A673 (cell line): ENCODE measurements at regions of chr12 and their contacts with region 1.

Region 1: DNA sequence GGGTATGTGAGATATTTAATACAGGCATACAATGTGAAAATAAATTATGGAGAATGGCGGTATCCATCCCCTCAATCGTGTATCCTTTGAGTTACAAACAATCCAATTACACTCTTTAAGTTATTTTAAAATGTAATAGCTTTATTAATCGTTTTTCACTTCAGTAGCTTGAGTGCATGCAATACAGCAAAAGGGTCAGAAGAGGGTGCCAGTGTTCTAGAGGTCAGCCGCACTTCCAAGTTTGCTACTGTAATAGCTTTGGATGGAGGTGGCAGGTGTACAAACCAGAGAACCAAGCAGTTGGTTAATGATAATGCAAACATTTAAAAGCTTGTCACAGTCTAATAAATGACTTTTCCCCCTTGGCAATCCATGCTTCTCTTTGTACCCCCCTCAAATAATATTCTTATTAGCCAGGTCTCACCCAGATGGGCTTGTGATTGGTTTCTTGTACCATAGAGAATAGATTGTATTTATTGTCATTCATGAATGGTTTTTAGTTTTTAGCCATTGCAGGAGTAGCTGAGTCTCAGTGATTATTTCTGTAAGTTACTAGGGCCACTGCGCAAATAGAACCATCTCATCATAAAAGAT is 127.0 kb downstream of the ERC1 start:
- DNase-seq: peak; percentile 74
- H3K4me3 ChIP-seq: no peak overlapping the region
- H3K27ac ChIP-seq: no peak overlapping the region
- H3K4me1 ChIP-seq: peaks cover 7% of the 10 kb centered on the region
- H3K27me3 ChIP-seq: no peaks in the 10 kb centered on the region
- CTCF ChIP-seq: peak; percentile 93

Region 2: GRCh38 chr12:823028-823698 is 294.9 kb before region 1 on chr12:
- CTCF ChIA-PET with region 1: no interaction called
- POLR2A ChIA-PET with region 1: no interaction called
- intact Hi-C with region 1: no loop called
- DNase-seq: no peak
- H3K4me3 ChIP-seq: no peak overlapping the region
- H3K27ac ChIP-seq: no peak overlapping the region
- H3K4me1 ChIP-seq: peaks cover 11% of the 10 kb centered on the region
- H3K27me3 ChIP-seq: no peaks in the 10 kb centered on the region
- CTCF ChIP-seq: no peak

Region 3: DNA sequence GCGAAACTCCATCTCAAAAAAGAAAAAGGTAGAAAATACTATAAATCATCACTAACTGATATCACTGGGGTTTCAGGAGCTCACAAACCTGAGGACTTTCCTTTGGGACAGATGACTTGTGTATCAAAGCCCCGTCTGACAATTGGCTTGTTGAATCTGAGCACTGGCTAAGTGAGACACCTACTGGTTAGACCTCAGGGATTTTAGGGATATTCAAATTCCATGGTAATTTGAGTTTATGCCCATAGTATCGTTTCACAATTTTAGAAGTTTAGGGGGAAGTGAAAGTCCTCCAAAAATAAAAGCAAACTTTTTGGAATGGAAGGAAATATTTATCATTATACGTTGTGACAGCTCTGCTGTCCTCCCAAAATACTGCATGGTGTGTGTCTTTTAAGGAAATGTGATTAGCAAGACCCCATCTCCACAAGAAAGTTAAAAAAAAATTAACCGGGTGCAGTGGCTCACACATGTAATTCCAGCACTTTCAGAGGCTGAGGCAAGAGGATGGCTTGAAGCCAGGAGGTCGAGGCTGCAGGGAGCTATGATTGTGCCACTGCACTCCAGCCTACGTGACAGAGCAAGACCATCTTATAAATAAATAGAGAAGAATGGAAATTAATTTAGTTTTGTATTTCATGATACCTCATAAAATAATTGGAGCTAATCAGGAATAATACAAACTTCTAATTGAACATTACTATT is 427.1 kb after region 1 on chr12:
- CTCF ChIA-PET with region 1: interaction called, 5 read pairs
- POLR2A ChIA-PET with region 1: no interaction called
- intact Hi-C with region 1: loop called (anchors 10 kb)
- DNase-seq: peak; percentile 53
- H3K4me3 ChIP-seq: no peak overlapping the region
- H3K27ac ChIP-seq: no peak overlapping the region
- H3K4me1 ChIP-seq: no peaks in the 10 kb centered on the region
- H3K27me3 ChIP-seq: no peaks in the 10 kb centered on the region
- CTCF ChIP-seq: peak; percentile 53

Region 4: DNA sequence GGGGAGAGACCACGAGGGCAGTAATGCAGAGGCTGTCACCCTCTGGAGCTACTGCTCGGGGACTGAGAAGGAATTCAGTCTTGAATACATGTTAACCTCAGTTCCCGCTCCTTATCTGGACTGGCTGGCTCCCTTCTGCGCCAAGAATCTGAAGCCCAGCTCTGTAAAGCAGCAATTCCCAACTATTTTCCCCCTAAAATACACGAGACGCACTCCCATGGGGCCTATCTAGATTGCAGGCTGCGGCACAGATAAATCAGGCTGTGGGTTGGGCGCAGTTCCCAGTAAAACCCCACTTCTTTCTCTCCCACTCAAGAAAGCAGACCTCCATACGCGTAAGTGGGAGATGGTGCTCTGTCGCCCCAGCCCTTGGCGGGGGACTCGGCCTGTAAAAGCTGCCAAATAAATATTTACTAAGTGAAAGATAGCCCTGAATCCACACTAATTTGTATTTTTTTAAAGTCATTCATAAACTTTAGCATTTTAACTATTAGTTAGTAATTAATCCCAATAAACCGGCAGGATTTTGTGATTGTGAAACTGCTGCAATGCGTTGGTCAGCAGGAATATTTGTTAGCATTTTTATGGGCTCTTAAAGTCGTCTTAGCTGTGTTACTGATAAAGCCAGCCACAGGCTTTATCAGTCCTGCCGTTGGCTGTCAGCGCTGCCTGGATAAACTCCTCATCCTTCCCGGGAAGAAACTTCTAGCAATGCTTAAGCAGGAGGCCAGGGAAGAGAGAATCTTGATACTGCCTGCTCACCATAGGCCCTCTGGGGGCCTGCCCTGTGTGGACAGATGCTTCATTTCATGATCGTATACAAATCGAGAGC is 458.6 kb after region 1 on chr12:
- CTCF ChIA-PET with region 1: interaction called, 35 read pairs
- POLR2A ChIA-PET with region 1: no interaction called
- intact Hi-C with region 1: loop called (anchors 1 kb)
- DNase-seq: peak; percentile 62
- H3K4me3 ChIP-seq: peak overlapping the region; percentile 20
- H3K27ac ChIP-seq: peak overlapping the region; percentile 69
- H3K4me1 ChIP-seq: peaks cover 41% of the 10 kb centered on the region
- H3K27me3 ChIP-seq: no peaks in the 10 kb centered on the region
- CTCF ChIP-seq: no peak

Region 5: DNA sequence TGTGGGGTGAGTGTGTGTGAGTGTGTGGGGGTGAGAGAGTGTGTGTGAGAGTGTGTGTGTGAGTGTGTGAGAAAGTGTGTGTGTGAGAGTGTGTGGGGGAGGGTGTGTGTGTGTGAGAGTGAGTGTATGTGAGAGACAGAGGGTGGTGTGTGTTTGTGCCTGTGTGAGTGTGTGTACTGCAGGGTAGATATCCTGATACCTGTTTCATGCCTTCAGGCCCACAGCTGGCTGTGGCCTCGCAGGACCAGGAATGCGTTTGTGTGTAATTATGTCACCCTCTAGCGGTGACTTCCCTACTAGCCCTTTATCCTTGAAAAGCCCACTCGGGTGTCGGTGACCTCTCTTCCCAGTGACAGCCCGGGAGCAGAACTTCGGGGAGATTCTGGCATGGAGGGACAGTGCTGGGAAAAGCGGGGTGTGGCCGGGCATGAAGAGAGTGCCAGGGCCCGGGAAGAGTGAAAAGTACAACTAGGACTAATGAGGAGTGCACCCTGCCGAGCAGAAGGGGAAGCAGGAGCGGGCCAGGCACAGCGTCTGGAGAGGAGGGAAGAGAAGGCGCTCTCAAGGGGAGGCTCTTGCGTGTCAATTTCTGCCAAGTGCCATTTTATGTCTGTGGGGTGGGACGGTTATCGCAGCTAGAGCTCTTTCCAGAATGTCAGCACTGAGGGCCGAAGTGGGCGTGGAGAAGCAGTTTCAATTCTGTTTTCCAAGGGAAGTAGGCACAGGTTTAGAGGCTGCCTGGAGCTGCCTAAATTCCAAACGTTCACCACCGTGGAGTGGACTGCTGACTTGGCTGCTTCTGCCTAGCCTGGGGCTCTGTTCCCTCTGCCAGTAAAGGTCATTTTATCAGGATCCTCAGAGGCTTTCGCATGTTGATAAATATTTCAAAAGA is 487.3 kb after region 1 on chr12:
- CTCF ChIA-PET with region 1: interaction called, 10 read pairs
- POLR2A ChIA-PET with region 1: no interaction called
- intact Hi-C with region 1: no loop called
- DNase-seq: peak; percentile 89
- H3K4me3 ChIP-seq: peak overlapping the region; percentile 48
- H3K27ac ChIP-seq: peak overlapping the region; percentile 82
- H3K4me1 ChIP-seq: peaks cover 38% of the 10 kb centered on the region
- H3K27me3 ChIP-seq: no peaks in the 10 kb centered on the region
- CTCF ChIP-seq: peak; percentile 91